Activated CD8-positive, alpha-beta T cell treated with anti-CD3 and anti-CD28 coated beads, Interleukin-2, amount 10 ng/mL, durations not matched to agents 7 days and 5 days (primary cell): ENCODE measurements at regions of chr16 and their contacts with region 1.

Region 1: GRCh38 chr16:3625911-3626732 is 14.7 kb upstream of the SLX4 start:
- DNase-seq: no peak
- ATAC-seq: peak; percentile 91
- H3K4me3 Mint-ChIP-seq: peak overlapping the region; percentile 50
- H3K27ac Mint-ChIP-seq: peak overlapping the region; percentile 88
- H3K4me1 Mint-ChIP-seq: peaks cover 27% of the 10 kb centered on the region
- H3K27me3 Mint-ChIP-seq: no peaks in the 10 kb centered on the region

Region 2: GRCh38 chr16:3570420-3571062 is 55.6 kb before region 1 on chr16:
- CTCF ChIA-PET with region 1: no interaction called
- POLR2A ChIA-PET with region 1: no interaction called
- DNase-seq: no peak
- ATAC-seq: no peak
- H3K4me3 Mint-ChIP-seq: no peak overlapping the region
- H3K27ac Mint-ChIP-seq: no peak overlapping the region
- H3K4me1 Mint-ChIP-seq: peaks cover 36% of the 10 kb centered on the region
- H3K27me3 Mint-ChIP-seq: no peaks in the 10 kb centered on the region

Region 3: DNA sequence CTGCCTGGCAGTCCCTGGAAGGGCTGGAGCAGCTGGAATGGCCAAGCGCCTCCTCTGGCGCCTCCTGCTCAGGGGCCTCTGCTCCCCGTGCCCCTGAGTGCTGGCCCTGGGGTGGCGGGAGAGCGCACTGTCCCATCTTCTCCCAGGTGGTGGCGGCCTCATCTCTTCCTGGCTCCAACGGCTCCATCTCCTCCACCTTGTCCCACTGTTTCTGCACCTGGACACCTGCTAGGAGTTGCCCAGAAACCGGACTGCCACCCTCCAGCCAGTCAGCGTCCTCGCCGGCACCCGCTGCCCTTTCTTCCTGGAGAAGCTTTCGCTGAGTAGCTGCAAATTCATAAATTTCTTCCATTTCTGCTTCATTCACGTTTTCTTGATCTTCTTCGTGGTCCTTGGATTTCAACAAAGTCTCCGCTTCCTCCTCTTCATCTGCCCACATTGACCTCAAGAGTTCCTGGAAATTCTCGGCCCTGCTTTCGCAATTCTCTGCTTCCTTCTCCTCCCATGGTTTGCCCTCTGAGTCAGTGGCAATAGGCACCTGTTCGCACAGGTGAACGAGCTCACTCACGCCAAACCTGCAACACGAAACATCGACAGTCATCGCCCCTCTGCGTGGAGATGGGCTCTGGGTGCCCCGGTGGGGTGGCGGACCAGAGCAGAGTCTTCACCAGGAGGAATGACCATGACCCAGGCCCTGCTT is 35.2 kb before region 1 on chr16:
- CTCF ChIA-PET with region 1: no interaction called
- POLR2A ChIA-PET with region 1: no interaction called
- DNase-seq: no peak
- ATAC-seq: no peak
- H3K4me3 Mint-ChIP-seq: no peak overlapping the region
- H3K27ac Mint-ChIP-seq: no peak overlapping the region
- H3K4me1 Mint-ChIP-seq: peaks cover 11% of the 10 kb centered on the region
- H3K27me3 Mint-ChIP-seq: no peaks in the 10 kb centered on the region

Region 4: GRCh38 chr16:3637371-3637923 is 11.3 kb after region 1 on chr16:
- CTCF ChIA-PET with region 1: interaction called, 11 read pairs
- POLR2A ChIA-PET with region 1: no interaction called
- DNase-seq: peak; percentile 62
- ATAC-seq: peak; percentile 73
- H3K4me3 Mint-ChIP-seq: peak overlapping the region; percentile 23
- H3K27ac Mint-ChIP-seq: peak overlapping the region; percentile 83
- H3K4me1 Mint-ChIP-seq: peaks cover 19% of the 10 kb centered on the region
- H3K27me3 Mint-ChIP-seq: no peaks in the 10 kb centered on the region

Region 5: DNA sequence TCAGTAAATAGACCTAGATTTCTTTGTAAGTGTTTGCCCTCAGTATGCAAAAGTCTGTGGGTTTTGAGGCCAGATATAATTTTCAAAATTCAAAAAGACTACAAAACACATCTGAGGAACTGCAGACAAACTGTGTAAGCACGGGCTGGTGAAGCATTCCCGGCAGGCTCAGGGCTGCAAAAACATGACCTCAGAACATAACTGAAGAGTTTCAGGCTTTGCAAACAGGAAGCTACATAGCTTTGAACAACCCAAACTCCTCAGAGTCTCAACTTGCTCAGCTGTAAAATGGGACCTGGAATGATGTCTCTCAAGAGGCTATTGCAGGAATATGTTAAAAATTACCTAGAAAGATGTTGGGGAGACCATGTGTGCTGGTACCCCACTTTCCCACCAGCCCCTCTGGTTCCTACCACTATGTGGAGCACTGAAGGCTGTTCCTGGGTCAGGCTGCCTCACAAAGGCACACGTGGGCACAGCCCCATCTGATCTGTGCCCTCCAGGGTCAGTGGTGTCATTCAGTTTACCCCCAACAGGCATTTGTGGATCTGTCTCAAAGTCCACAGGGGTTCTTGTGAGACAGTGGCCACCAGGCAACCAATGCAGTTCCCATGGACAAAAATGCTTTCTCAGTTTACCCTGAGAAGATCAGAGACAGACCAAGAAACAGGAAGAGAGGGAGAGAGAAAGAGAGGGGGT is 181.5 kb after region 1 on chr16:
- CTCF ChIA-PET with region 1: no interaction called
- POLR2A ChIA-PET with region 1: no interaction called
- DNase-seq: no peak
- ATAC-seq: peak; percentile 49
- H3K4me3 Mint-ChIP-seq: no peak overlapping the region
- H3K27ac Mint-ChIP-seq: peak overlapping the region; percentile 83
- H3K4me1 Mint-ChIP-seq: peaks cover 73% of the 10 kb centered on the region
- H3K27me3 Mint-ChIP-seq: no peaks in the 10 kb centered on the region